ENCODE measurements at regions of chr9 and their contacts with region 1.

Region 1: GRCh38 chr9:136572003-136572827 is 26.4 kb upstream of the NOTCH1 start:
- DNase-seq: peak; percentile 88 to 93
- H3K4me3 ChIP-seq: peak overlapping the region in 3 of 4 experiments; percentile 4 to 29 (median 10); a peak in 4 of 8 replicates
- H3K27ac ChIP-seq: peak overlapping the region; percentile 83
- H3K4me1 ChIP-seq: peaks cover 5 to 52% (median 39%) of the 10 kb centered on the region in 4 experiments
- H3K27me3 ChIP-seq: no peaks in the 10 kb centered on the region; a peak in 1 of 7 replicates
- CTCF ChIP-seq: no peak
- EP300 ChIP-seq: peak in 1 of 2 experiments; percentile 93; a peak in 1 of 3 replicates
- POLR2A ChIP-seq: peak in 1 of 2 experiments; percentile 78; a peak in 2 of 3 replicates
- RAD21 ChIP-seq: no peak; a peak in 1 of 4 replicates

Region 2: DNA sequence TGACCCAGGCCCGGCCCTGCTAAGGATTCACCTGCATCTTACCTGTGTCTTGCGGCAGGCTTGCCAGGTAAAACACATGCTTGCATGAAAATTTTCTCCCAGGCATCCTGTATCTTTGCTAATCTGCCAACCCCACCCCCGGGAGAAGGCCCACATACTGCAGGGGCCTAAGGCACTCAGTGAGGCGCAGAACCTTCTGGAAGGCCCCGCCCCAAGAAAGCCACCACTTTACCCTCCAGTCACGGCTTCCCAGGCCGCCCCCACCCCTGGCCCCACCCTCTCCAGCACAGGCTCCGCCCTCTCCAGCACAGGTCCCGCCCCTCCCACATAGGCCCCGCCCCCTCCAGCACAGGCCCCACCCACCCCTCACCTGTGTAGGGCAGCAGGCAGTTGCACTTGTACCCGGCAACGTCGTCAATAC is 59.6 kb before region 1 on chr9:
- CTCF ChIA-PET with region 1: no interaction called
- POLR2A ChIA-PET with region 1: no interaction called
- DNase-seq: no peak
- H3K4me3 ChIP-seq: no peak overlapping the region
- H3K27ac ChIP-seq: no peak overlapping the region
- H3K4me1 ChIP-seq: no peaks in the 10 kb centered on the region
- H3K27me3 ChIP-seq: no peaks in the 10 kb centered on the region
- CTCF ChIP-seq: no peak
- EP300 ChIP-seq: no peak
- POLR2A ChIP-seq: no peak
- RAD21 ChIP-seq: no peak

Region 3: DNA sequence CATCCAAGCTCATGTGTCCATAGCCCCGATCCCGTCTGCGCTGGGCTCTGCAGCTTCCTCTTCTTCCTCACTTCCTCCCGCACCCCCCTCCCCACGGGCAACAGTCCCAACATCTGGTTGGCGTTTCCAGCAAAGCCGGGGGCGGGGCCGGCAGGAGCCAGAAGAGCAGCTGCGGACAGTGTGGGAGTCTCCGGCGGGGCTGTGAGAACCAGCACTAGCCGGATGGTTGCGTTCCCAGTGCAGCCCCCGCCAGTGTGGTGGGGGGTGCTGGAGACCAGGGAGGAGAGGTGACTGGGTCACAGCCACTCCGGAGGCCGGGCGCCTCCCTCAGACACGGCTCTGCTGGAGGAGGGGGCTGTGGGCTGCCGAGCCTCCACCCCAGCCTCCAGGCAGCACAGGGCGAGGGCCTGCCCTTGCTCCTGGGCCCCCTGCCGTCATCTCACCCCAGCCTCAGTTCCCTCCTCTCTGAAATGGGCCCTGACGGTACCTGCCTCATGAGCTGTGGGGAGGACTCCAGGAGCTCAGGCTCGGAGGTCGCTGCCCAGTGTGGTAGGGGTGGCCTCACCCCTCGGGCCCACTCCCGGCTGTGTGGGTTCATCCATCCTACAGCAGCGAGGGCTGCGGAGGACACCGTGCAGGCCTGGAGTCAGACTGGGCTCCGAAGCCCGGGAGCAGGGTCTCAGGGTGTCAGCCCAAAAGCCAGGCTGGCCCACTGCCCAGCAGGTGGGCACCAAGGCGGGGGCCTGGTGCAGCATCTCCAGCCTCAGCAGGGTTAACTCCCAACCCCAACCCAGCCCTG is 15.1 kb after region 1 on chr9:
- CTCF ChIA-PET with region 1: interaction called, 8 read pairs
- POLR2A ChIA-PET with region 1: interaction called, 30 read pairs
- DNase-seq: peak in 1 of 2 experiments; percentile 85
- H3K4me3 ChIP-seq: peak overlapping the region in 3 of 4 experiments; percentile 32 to 53 (median 36); a peak in 6 of 8 replicates
- H3K27ac ChIP-seq: 0 out of 2 replicates have a peak overlapping the region, but pooled peaks have one; percentile 56
- H3K4me1 ChIP-seq: peaks cover 3 to 48% (median 36%) of the 10 kb centered on the region in 4 experiments
- H3K27me3 ChIP-seq: no peaks in the 10 kb centered on the region
- CTCF ChIP-seq: no peak
- EP300 ChIP-seq: 0 out of 3 replicates have a peak, but pooled peaks of 1 of the 2 experiments have one; percentile 40
- POLR2A ChIP-seq: no peak
- RAD21 ChIP-seq: no peak; a peak in 1 of 4 replicates

Region 4: DNA sequence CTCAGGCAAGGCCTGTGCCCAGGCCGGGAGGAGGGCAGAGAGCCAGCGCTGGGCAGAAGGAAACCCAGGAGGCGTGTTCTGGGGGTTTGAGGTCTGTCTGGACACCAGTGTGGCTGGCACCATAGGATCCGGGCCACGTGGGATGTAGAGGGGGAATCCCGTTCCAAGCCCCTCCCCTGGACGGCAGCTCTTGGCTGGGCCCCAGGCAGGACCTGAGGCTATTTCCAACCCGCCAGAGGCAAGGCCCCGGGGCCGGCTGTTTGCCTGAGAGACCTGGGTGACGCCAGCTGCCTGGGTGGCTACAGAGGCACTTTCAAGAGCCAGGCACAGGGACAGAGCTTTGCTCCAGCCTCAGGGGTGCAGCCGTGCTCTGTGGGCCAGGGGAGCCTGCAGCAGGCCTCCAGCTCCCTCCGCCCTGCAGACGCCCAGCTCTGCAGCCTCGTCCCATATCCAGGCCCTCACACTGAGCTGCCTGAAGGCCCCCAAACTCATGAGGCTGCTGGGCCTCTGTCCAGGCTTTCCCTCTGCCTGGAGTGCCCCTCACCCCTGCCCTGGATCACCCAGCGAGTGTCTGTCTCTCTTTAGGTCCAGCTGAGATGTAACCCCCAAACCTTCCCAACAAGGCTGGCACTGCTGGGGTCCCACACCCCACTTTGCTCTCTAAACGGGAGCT is 33.9 kb after region 1 on chr9:
- CTCF ChIA-PET with region 1: interaction called, 10 read pairs
- POLR2A ChIA-PET with region 1: interaction called, 10 read pairs
- DNase-seq: no peak
- H3K4me3 ChIP-seq: no peak overlapping the region
- H3K27ac ChIP-seq: no peak overlapping the region
- H3K4me1 ChIP-seq: peaks cover 0 to 32% (median 15%) of the 10 kb centered on the region in 4 experiments; a peak in 5 of 7 replicates
- H3K27me3 ChIP-seq: 0 out of 7 replicates have a peak, but pooled peaks cover 0 to 2% (median 0%) of the 10 kb centered on the region in 4 experiments
- CTCF ChIP-seq: no peak
- EP300 ChIP-seq: no peak
- POLR2A ChIP-seq: no peak
- RAD21 ChIP-seq: no peak

Region 5: DNA sequence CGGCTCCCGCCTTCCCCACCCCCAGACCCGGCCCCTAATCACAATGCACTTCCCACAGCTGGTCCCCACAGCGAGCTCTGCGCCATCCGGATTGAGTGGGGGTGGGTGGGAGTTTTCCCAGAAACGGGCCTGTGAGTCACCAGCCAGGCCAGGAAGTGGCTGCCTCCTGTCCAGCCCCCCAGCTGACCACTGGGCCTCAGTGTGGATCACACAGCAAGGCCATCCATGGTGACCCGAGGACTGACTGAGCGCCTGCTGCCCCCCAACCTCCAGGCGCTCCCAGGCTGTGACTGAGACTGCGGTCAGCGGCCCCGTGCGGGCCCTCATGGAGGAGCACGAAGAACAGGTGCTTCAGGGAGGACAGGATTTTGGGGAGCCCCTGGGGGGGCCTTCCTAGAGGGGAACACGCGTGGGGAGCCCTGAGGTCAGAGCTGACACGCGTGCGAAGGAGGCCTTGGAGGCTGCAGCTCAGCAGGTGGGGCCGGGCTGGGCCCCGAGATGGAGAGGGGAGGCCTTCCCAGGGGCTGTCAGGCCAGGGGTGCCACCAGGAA is 42.2 kb after region 1 on chr9:
- CTCF ChIA-PET with region 1: interaction called, 4 read pairs
- POLR2A ChIA-PET with region 1: interaction called, 10 read pairs
- DNase-seq: no peak
- H3K4me3 ChIP-seq: no peak overlapping the region
- H3K27ac ChIP-seq: no peak overlapping the region
- H3K4me1 ChIP-seq: peaks cover 0 to 15% (median 6%) of the 10 kb centered on the region in 4 experiments; a peak in 6 of 7 replicates
- H3K27me3 ChIP-seq: no peaks in the 10 kb centered on the region
- CTCF ChIP-seq: no peak
- EP300 ChIP-seq: no peak
- POLR2A ChIP-seq: no peak
- RAD21 ChIP-seq: no peak

Measured in H1 (cell line).